ENCODE measurements at regions of chr4 and their contacts with region 1.

Region 1: GRCh38 chr4:118278473-118279274 is 74.1 kb downstream of the PRSS12 start:
- DNase-seq: peak; percentile 98
- H3K4me3 ChIP-seq: peak overlapping the region; percentile 64
- H3K27ac ChIP-seq: peak overlapping the region; percentile 78
- H3K4me1 ChIP-seq: no peaks in the 10 kb centered on the region
- H3K27me3 ChIP-seq: no peaks in the 10 kb centered on the region
- CTCF ChIP-seq: no peak

Region 2: GRCh38 chr4:117811731-117812130 is 466.9 kb before region 1 on chr4:
- intact Hi-C with region 1: no loop called
- DNase-seq: no peak
- H3K4me3 ChIP-seq: no peak overlapping the region
- H3K27ac ChIP-seq: no peak overlapping the region
- H3K4me1 ChIP-seq: no peaks in the 10 kb centered on the region
- H3K27me3 ChIP-seq: no peaks in the 10 kb centered on the region
- CTCF ChIP-seq: no peak

Region 3: GRCh38 chr4:118034053-118034785 is 244.5 kb before region 1 on chr4 and contains the start of gene NDST3:
- intact Hi-C with region 1: no loop called
- DNase-seq: peak; percentile 26
- H3K4me3 ChIP-seq: peak within 1 kb of the TSS; percentile 42
- H3K27ac ChIP-seq: no peak within 1 kb of the TSS
- H3K4me1 ChIP-seq: no peaks in the 10 kb centered on the region
- H3K27me3 ChIP-seq: no peaks in the 10 kb centered on the region
- CTCF ChIP-seq: no peak
- total RNA-seq, gene NDST3: not detected

Region 4: GRCh38 chr4:118076958-118077766 is 201.5 kb before region 1 on chr4:
- intact Hi-C with region 1: loop called (anchors 10 kb)
- DNase-seq: peak; percentile 22
- H3K4me3 ChIP-seq: no peak overlapping the region
- H3K27ac ChIP-seq: no peak overlapping the region
- H3K4me1 ChIP-seq: no peaks in the 10 kb centered on the region
- H3K27me3 ChIP-seq: no peaks in the 10 kb centered on the region
- CTCF ChIP-seq: no peak

Region 5: GRCh38 chr4:118099106-118099505 is 179.6 kb before region 1 on chr4:
- intact Hi-C with region 1: no loop called
- DNase-seq: no peak
- H3K4me3 ChIP-seq: no peak overlapping the region
- H3K27ac ChIP-seq: no peak overlapping the region
- H3K4me1 ChIP-seq: no peaks in the 10 kb centered on the region
- H3K27me3 ChIP-seq: no peaks in the 10 kb centered on the region
- CTCF ChIP-seq: no peak

Region 6: DNA sequence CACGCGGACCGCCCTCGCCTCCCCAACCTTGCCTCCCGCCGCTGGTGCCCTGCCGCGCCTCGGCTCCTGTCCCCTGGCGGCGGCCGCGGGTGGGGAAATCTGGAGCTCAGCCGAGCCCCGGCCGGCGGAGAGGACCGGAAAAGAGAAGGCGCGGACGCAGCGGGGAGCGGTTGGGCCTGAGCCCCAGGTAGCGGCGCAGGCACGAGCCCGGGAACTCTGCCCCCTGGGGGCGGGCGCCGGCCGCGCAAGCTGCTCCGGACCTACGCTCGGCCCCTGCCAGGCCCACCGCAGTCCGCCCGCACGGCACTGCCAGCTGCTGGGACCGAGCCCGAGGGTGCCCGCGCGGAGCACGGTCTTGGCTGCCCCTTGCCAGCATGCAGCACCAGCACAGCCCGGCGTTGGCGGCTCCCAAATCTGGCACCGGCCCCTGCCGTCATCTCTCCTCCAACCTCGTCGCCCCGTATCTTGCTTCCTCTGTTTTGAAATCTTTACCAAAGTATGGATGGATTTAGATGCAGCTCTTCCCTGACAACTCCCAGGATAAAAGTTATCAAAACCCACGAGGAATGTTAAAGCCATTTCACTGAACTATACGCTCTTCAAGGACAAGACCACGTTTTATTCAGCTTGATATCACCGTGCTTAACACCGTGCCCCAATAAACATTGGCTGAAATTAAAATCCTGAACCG is 74.3 kb after region 1 on chr4 and contains the start of gene PRSS12:
- intact Hi-C with region 1: loop called (anchors 2 kb)
- DNase-seq: peak; percentile 83
- H3K4me3 ChIP-seq: peak within 1 kb of the TSS; percentile 55
- H3K27ac ChIP-seq: peak within 1 kb of the TSS; percentile 86
- H3K4me1 ChIP-seq: peaks cover 4% of the 10 kb centered on the region
- H3K27me3 ChIP-seq: peaks cover 5% of the 10 kb centered on the region
- CTCF ChIP-seq: peak; percentile 76
- total RNA-seq, gene PRSS12: 20.1 to 22.4 TPM

Region 7: GRCh38 chr4:118835571-118836300 is 557.1 kb after region 1 on chr4 and contains the start of gene SEC24D:
- intact Hi-C with region 1: loop called (anchors 10 kb)
- DNase-seq: peak; percentile 89
- H3K4me3 ChIP-seq: peak within 1 kb of the TSS; percentile 98
- H3K27ac ChIP-seq: peak within 1 kb of the TSS; percentile 98
- H3K4me1 ChIP-seq: no peaks in the 10 kb centered on the region
- H3K27me3 ChIP-seq: no peaks in the 10 kb centered on the region
- CTCF ChIP-seq: no peak
- total RNA-seq, gene SEC24D: 71.8 to 77.0 TPM